GM23248 (cell line): ENCODE measurements at regions of chrX and their contacts with region 1.

Region 1: GRCh38 chrX:119067023-119067739 is 5.6 kb upstream of the CT47C1 start:
- DNase-seq: peak; percentile 80
- H3K4me3 ChIP-seq: no peak overlapping the region
- H3K27ac ChIP-seq: no peak overlapping the region
- H3K4me1 ChIP-seq: no peaks in the 10 kb centered on the region
- H3K27me3 ChIP-seq: no peaks in the 10 kb centered on the region

Region 2: GRCh38 chrX:118847676-118848075 is 219.5 kb before region 1 on chrX:
- in situ Hi-C with region 1: loop called (anchors 10 kb)
- DNase-seq: peak; percentile 60
- H3K4me3 ChIP-seq: no peak overlapping the region
- H3K27ac ChIP-seq: no peak overlapping the region
- H3K4me1 ChIP-seq: no peaks in the 10 kb centered on the region
- H3K27me3 ChIP-seq: no peaks in the 10 kb centered on the region

Region 3: DNA sequence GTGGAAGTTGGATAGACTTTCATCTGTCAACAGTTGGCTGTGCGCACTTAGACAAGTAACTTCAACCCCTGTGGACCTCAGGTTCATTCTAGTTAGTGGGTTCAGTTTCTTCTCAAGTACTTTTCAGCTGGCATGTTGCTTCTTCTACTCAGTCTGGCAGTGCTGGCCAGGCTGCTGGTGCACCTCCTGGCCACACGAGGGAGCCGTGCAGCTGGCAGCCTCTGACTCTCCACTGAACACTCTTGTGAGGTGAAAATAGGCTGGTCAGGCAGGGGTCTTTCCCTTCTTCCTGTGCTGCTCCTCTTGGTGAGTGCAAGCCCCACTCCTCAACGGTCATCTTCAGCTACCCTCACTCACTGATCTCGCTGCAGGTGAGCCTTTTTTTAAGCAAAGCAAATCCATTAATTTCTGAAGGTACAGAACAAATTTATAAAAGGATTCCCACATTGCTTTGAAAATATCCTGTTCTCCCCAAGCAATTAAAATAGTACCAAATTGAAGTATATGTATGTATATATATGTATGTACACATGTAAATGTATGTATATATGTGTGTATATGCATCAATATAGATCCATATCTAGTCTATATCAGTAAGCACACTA is 62.2 kb before region 1 on chrX:
- in situ Hi-C with region 1: loop called (anchors 5 kb)
- DNase-seq: peak; percentile 56
- H3K4me3 ChIP-seq: no peak overlapping the region
- H3K27ac ChIP-seq: no peak overlapping the region
- H3K4me1 ChIP-seq: no peaks in the 10 kb centered on the region
- H3K27me3 ChIP-seq: no peaks in the 10 kb centered on the region